Naive thymus-derived CD4-positive, alpha-beta T cell (primary cell): ENCODE measurements at regions of chr4 and their contacts with region 1.

Region 1: GRCh38 chr4:2852481-2852921 is 8.9 kb downstream of the ADD1 start:
- DNase-seq: peak in 6 of 9 donors; percentile 26 to 50 (median 38)
- ATAC-seq: peak; percentile 62
- H3K4me3 ChIP-seq: peak overlapping the region; percentile 38
- H3K4me3 Mint-ChIP-seq: peak overlapping the region; percentile 56 to 86 (median 74)
- H3K27ac ChIP-seq: peak overlapping the region; percentile 64
- H3K27ac Mint-ChIP-seq: peak overlapping the region; percentile 57 to 94 (median 92)
- H3K4me1 ChIP-seq: peaks cover 32 to 46% of the 10 kb centered on the region in 2 donors
- H3K4me1 Mint-ChIP-seq: peaks cover 52 to 86% (median 66%) of the 10 kb centered on the region in 7 donors
- H3K27me3 ChIP-seq: no peaks in the 10 kb centered on the region
- H3K27me3 Mint-ChIP-seq: no peaks in the 10 kb centered on the region

Region 2: GRCh38 chr4:2673157-2673556 is 179.3 kb before region 1 on chr4:
- CTCF ChIA-PET with region 1: no interaction called
- POLR2A ChIA-PET with region 1: no interaction called
- intact Hi-C with region 1: no loop called
- DNase-seq: no peak
- ATAC-seq: no peak
- H3K4me3 ChIP-seq: no peak overlapping the region
- H3K4me3 Mint-ChIP-seq: no peak overlapping the region
- H3K27ac ChIP-seq: no peak overlapping the region
- H3K27ac Mint-ChIP-seq: peak overlapping the region in 2 of 9 donors; percentile 6 to 58
- H3K4me1 ChIP-seq: no peaks in the 10 kb centered on the region
- H3K4me1 Mint-ChIP-seq: peaks cover 11 to 37% (median 24%) of the 10 kb centered on the region in 7 donors
- H3K27me3 ChIP-seq: no peaks in the 10 kb centered on the region
- H3K27me3 Mint-ChIP-seq: no peaks in the 10 kb centered on the region

Region 3: DNA sequence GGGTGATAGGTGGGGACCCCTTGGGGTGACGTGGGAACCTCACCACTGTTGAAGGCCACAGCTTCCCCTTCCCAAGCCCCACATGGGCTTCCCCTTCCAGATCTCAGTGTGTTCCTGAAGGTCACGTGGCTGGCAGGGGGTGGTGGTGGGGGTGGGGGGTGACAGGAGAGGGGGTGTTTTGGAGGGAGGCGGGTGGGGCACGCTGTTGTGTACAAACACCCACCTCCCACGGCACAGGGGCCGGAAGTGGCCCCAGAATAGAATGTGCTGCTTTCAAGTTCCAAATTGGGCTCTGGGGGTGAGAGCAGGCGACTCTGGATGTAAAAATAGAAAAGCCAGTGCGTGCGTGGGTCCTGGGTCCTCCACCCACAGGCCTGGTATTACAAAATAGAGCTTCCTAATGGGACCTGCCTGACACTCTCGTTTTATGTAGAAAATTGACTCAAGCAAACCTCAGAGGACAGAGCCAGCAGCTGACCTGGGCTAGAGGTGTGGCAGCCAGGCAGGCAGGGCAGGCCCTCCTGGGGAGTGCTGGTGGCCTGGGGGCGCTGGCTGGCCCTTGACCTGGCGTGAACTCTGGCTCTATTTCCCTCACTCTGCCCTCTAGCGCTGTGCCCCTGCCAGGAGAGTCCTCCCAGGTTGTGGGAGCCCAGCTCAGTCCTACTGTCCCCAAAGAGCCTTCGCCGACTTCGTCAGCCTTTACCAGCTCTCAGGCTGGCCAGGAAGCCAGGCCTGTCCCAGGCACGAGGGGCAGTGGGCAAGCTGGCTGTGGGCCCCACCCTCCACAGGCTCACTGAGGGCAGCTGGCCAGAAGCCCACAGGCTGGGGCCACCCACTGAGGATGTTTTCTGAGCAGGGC is 65.0 kb before region 1 on chr4:
- CTCF ChIA-PET with region 1: no interaction called
- POLR2A ChIA-PET with region 1: no interaction called
- intact Hi-C with region 1: loop called in 1 of 2 experiments (anchors 5 kb)
- DNase-seq: peak in 7 of 9 donors; percentile 30 to 68 (median 56)
- ATAC-seq: peak; percentile 65
- H3K4me3 ChIP-seq: no peak overlapping the region
- H3K4me3 Mint-ChIP-seq: peak overlapping the region; percentile 47 to 77 (median 56)
- H3K27ac ChIP-seq: peak overlapping the region; percentile 80
- H3K27ac Mint-ChIP-seq: peak overlapping the region; percentile 86 to 95 (median 90)
- H3K4me1 ChIP-seq: peaks cover 25 to 30% of the 10 kb centered on the region in 2 donors
- H3K4me1 Mint-ChIP-seq: peaks cover 21 to 54% (median 37%) of the 10 kb centered on the region in 7 donors
- H3K27me3 ChIP-seq: no peaks in the 10 kb centered on the region
- H3K27me3 Mint-ChIP-seq: peaks cover 0 to 13% (median 0%) of the 10 kb centered on the region in 5 donors

Region 4: DNA sequence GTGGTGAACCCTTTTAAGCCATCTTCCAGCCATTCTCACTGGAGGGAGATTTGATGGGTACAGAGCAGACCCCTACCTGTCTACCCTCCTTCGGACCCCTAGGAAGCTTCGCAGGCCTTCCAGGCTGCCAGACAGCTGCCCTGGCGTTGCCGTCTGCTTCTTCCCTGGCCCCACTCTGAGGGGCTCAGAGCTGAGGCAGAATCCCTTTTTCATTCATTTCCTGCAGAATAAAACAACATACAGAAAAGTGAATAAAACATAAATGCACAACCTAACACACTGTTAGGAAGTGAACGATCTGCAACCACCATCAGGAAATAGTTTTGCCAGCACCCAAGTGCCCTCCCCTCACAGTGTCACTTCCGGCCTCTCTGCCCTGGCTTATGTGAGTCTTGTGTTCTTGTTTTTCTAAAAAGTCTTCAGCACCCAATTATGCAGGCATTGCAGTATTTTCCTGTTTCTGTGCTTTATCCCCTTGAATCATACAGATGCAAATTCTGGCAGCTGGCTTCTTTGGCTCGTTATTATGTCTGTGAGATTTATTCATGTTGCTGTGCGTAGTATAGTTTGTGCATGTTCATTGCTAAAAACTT is 14.5 kb before region 1 on chr4:
- CTCF ChIA-PET with region 1: interaction called, 6 read pairs
- POLR2A ChIA-PET with region 1: interaction called, 7 read pairs
- intact Hi-C with region 1: loop called in 1 of 2 experiments (anchors 1 kb)
- DNase-seq: peak in 7 of 9 donors; percentile 74 to 86 (median 83)
- ATAC-seq: peak; percentile 94
- H3K4me3 ChIP-seq: peak overlapping the region; percentile 66
- H3K4me3 Mint-ChIP-seq: peak overlapping the region; percentile 82 to 96 (median 88)
- H3K27ac ChIP-seq: peak overlapping the region; percentile 82
- H3K27ac Mint-ChIP-seq: peak overlapping the region; percentile 91 to 98 (median 94)
- H3K4me1 ChIP-seq: peaks cover 54 to 60% of the 10 kb centered on the region in 2 donors
- H3K4me1 Mint-ChIP-seq: peaks cover 48 to 83% (median 54%) of the 10 kb centered on the region in 7 donors
- H3K27me3 ChIP-seq: no peaks in the 10 kb centered on the region
- H3K27me3 Mint-ChIP-seq: no peaks in the 10 kb centered on the region

Region 5: GRCh38 chr4:2886622-2887021 is 34.1 kb after region 1 on chr4:
- CTCF ChIA-PET with region 1: no interaction called
- POLR2A ChIA-PET with region 1: no interaction called
- intact Hi-C with region 1: loop called in 1 of 2 experiments (anchors 5 kb)
- DNase-seq: no peak
- ATAC-seq: no peak
- H3K4me3 ChIP-seq: no peak overlapping the region
- H3K4me3 Mint-ChIP-seq: no peak overlapping the region
- H3K27ac ChIP-seq: no peak overlapping the region
- H3K27ac Mint-ChIP-seq: peak overlapping the region in 5 of 9 donors; percentile 27 to 83 (median 49)
- H3K4me1 ChIP-seq: no peaks in the 10 kb centered on the region
- H3K4me1 Mint-ChIP-seq: peaks cover 8 to 31% (median 20%) of the 10 kb centered on the region in 7 donors
- H3K27me3 ChIP-seq: no peaks in the 10 kb centered on the region
- H3K27me3 Mint-ChIP-seq: no peaks in the 10 kb centered on the region